ENCODE measurements at regions of chr14 and their contacts with region 1.

Region 1: GRCh38 chr14:76876076-76876475 is 49.9 kb downstream of the LRRC74A start:
- DNase-seq: no peak
- ATAC-seq: peak; percentile 92
- H3K4me3 ChIP-seq: no peak overlapping the region
- H3K27ac ChIP-seq: no peak overlapping the region
- H3K4me1 ChIP-seq: no peaks in the 10 kb centered on the region
- H3K27me3 ChIP-seq: no peaks in the 10 kb centered on the region; a peak in 1 of 4 replicates
- CTCF ChIP-seq: peak; percentile 90 to 94 (median 92)
- EP300 ChIP-seq: no peak
- POLR2A ChIP-seq: no peak
- RAD21 ChIP-seq: peak; percentile 97

Region 2: GRCh38 chr14:76904740-76905438 is 28.8 kb after region 1 on chr14:
- CTCF ChIA-PET with region 1: interaction called, 77 read pairs
- POLR2A ChIA-PET with region 1: interaction called, 4 read pairs
- RAD21 ChIA-PET with region 1: interaction called, 59 read pairs
- SMC1A ChIA-PET with region 1: interaction called, 38 read pairs
- in situ Hi-C with region 1: no loop called
- intact Hi-C with region 1: no loop called
- DNase-seq: peak; percentile 84
- ATAC-seq: peak; percentile 93
- H3K4me3 ChIP-seq: no peak overlapping the region
- H3K27ac ChIP-seq: peak overlapping the region; percentile 38
- H3K4me1 ChIP-seq: peaks cover 11% of the 10 kb centered on the region
- H3K27me3 ChIP-seq: no peaks in the 10 kb centered on the region
- CTCF ChIP-seq: no peak
- EP300 ChIP-seq: no peak
- POLR2A ChIP-seq: no peak
- RAD21 ChIP-seq: no peak

Region 3: DNA sequence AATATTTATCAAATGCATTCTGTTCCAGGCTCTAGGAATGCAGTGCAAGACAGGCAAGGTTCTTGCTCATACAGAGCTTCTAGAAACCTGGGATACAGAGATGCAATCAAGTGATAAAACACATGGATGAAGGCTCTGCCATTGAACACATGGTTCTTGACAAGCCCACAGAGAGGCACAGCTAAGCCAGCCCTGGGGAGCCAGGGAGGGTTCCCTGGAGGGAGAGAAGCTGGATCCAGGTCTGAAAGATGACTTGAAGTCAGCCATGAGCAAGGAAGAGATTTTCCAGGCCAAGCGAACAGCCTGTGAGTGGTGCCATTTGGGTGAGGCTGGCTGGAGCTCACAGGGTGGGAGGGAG is 86.2 kb after region 1 on chr14:
- CTCF ChIA-PET with region 1: interaction called, 8 read pairs
- POLR2A ChIA-PET with region 1: interaction called, 3 read pairs
- RAD21 ChIA-PET with region 1: interaction called, 3 read pairs
- SMC1A ChIA-PET with region 1: interaction called, 12 read pairs
- in situ Hi-C with region 1: no loop called
- intact Hi-C with region 1: no loop called
- DNase-seq: no peak
- ATAC-seq: no peak
- H3K4me3 ChIP-seq: peak overlapping the region; percentile 50; the same call in 1 of the 2 replicates
- H3K27ac ChIP-seq: peak overlapping the region; percentile 90
- H3K4me1 ChIP-seq: peaks cover 77% of the 10 kb centered on the region
- H3K27me3 ChIP-seq: no peaks in the 10 kb centered on the region
- CTCF ChIP-seq: no peak
- EP300 ChIP-seq: no peak
- POLR2A ChIP-seq: no peak
- RAD21 ChIP-seq: no peak

Region 4: DNA sequence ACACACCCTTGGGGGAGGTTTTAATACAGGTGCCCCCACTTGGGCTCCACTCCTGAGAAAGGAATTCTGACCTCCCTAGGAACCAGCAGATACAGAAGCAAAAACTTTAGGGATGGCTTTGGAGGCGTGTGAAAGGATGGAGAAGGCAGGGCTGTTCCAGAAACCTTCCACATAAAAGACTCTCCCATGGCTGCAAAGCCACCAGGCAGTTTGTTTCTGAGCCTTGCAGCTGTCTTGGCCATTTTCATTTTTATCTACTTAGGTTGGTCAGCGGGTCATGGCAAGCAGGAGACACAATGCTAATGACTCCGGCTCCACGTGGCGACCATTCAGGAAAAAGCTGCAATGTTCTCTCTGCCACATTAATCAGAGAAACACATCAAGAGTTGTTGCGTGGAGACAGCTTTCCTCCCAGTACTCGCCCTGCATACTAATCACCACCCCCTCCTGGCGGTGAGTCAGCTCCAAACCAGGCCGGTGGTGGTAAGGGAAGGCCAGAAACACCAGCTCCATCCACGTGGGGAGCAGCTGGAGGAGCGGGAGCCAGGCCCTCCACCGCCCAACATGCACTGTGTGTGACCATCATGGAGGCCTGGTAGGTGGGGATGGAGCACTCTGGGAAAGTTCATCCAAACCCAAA is 183.3 kb after region 1 on chr14:
- CTCF ChIA-PET with region 1: interaction called, 848 read pairs
- POLR2A ChIA-PET with region 1: no interaction called
- RAD21 ChIA-PET with region 1: interaction called, 498 read pairs
- SMC1A ChIA-PET with region 1: interaction called, 68 read pairs
- in situ Hi-C with region 1: loop called (anchors 10 kb)
- intact Hi-C with region 1: no loop called
- DNase-seq: no peak
- ATAC-seq: peak; percentile 57
- H3K4me3 ChIP-seq: no peak overlapping the region
- H3K27ac ChIP-seq: no peak overlapping the region
- H3K4me1 ChIP-seq: no peaks in the 10 kb centered on the region
- H3K27me3 ChIP-seq: no peaks in the 10 kb centered on the region
- CTCF ChIP-seq: peak in 2 of 3 experiments; percentile 1 to 18; a peak in 1 of 6 replicates
- EP300 ChIP-seq: no peak
- POLR2A ChIP-seq: no peak
- RAD21 ChIP-seq: peak; percentile 27; the same call in 1 of the 2 replicates

Region 5: DNA sequence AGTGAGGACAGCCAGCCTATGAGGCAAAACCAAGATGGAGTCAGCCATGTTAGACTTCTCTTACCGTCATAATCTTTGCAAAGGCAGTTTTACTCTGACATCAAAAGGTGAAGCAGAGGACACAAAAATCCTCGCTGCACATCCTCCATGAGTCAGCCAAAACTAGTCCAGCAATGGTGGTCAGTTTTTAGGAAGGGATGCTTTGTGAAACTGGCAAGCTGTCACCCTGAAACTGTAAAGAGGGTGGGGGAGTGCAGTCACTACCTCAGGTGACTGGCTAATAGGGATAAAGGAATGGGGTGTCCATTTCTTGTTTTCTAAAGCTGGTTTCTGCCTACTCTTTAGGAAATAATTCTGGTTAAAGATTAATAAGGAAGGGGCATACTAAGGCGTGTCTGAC is 216.6 kb after region 1 on chr14:
- CTCF ChIA-PET with region 1: interaction called, 205 read pairs
- POLR2A ChIA-PET with region 1: no interaction called
- RAD21 ChIA-PET with region 1: interaction called, 51 read pairs
- SMC1A ChIA-PET with region 1: interaction called, 50 read pairs
- in situ Hi-C with region 1: no loop called
- intact Hi-C with region 1: loop called (anchors 1 kb)
- DNase-seq: no peak
- ATAC-seq: peak; percentile 51
- H3K4me3 ChIP-seq: no peak overlapping the region
- H3K27ac ChIP-seq: no peak overlapping the region
- H3K4me1 ChIP-seq: peaks cover 5% of the 10 kb centered on the region; the same call in 1 of the 2 replicates
- H3K27me3 ChIP-seq: no peaks in the 10 kb centered on the region; a peak in 1 of 4 replicates
- CTCF ChIP-seq: no peak
- EP300 ChIP-seq: no peak
- POLR2A ChIP-seq: no peak
- RAD21 ChIP-seq: no peak

Region 6: DNA sequence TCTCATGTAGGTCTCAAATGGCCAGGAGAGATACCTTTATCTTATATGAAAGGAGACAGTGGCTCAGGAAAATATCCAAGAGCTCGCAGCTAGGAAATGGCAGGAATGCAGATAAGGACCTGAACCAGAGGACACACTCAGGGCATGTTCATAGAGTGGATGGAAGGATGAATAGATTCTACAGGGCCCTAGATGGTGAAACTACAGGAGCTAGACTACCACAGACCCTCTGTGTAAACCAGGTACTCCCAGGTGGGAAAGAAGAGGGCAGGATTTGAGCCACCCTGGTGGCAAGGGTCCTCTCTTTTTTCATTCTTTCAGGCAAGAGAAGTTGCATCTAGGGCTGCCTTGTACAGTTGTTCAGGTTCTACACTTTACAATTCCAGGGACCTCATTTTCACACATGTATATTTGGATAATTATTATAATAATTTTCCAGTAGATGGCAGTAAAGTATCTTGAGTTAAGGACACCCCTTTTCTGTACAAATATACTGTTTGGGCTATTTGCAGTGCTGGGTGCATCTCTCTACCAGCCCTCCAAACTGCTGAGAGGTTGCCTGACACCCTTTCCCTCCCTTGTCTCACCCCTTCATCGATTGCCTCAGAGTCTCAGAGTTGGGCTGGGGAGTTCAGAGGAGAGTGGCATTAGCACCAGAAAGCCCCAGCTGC is 276.0 kb after region 1 on chr14:
- CTCF ChIA-PET with region 1: interaction called, 29 read pairs
- POLR2A ChIA-PET with region 1: no interaction called
- RAD21 ChIA-PET with region 1: interaction called, 10 read pairs
- SMC1A ChIA-PET with region 1: interaction called, 26 read pairs
- in situ Hi-C with region 1: no loop called
- intact Hi-C with region 1: loop called (anchors 2 kb)
- DNase-seq: no peak
- ATAC-seq: peak; percentile 91
- H3K4me3 ChIP-seq: no peak overlapping the region
- H3K27ac ChIP-seq: no peak overlapping the region
- H3K4me1 ChIP-seq: no peaks in the 10 kb centered on the region
- H3K27me3 ChIP-seq: peaks cover 0 to 2% of the 10 kb centered on the region in 2 experiments; a peak in 2 of 4 replicates
- CTCF ChIP-seq: peak in 2 of 3 experiments; percentile 7 to 41; a peak in 3 of 6 replicates
- EP300 ChIP-seq: no peak
- POLR2A ChIP-seq: no peak
- RAD21 ChIP-seq: peak; percentile 58